GM12878 (cell line): ENCODE measurements at regions of chr6 and their contacts with region 1.

Region 1: GRCh38 chr6:105733565-105734162 is 330.8 kb upstream of the PREP start:
- DNase-seq: no peak
- ATAC-seq: peak; percentile 41; the same call in 1 of the 3 replicates
- H3K4me3 ChIP-seq: no peak overlapping the region
- H3K27ac ChIP-seq: no peak overlapping the region
- H3K4me1 ChIP-seq: no peaks in the 10 kb centered on the region
- H3K27me3 ChIP-seq: no peaks in the 10 kb centered on the region
- CTCF ChIP-seq: peak; percentile 48 to 52 (median 50); a peak in 5 of 6 replicates
- EP300 ChIP-seq: no peak
- POLR2A ChIP-seq: no peak
- RAD21 ChIP-seq: peak; percentile 56

Region 2: GRCh38 chr6:104784884-104785283 is 948.8 kb before region 1 on chr6:
- CTCF ChIA-PET with region 1: no interaction called
- POLR2A ChIA-PET with region 1: no interaction called
- RAD21 ChIA-PET with region 1: no interaction called
- SMC1A ChIA-PET with region 1: no interaction called
- in situ Hi-C with region 1: no loop called
- intact Hi-C with region 1: no loop called
- DNase-seq: no peak
- ATAC-seq: no peak
- H3K4me3 ChIP-seq: no peak overlapping the region
- H3K27ac ChIP-seq: no peak overlapping the region
- H3K4me1 ChIP-seq: peaks cover 3% of the 10 kb centered on the region; the same call in 1 of the 2 replicates
- H3K27me3 ChIP-seq: no peaks in the 10 kb centered on the region
- CTCF ChIP-seq: no peak
- EP300 ChIP-seq: no peak
- POLR2A ChIP-seq: no peak
- RAD21 ChIP-seq: no peak

Region 3: DNA sequence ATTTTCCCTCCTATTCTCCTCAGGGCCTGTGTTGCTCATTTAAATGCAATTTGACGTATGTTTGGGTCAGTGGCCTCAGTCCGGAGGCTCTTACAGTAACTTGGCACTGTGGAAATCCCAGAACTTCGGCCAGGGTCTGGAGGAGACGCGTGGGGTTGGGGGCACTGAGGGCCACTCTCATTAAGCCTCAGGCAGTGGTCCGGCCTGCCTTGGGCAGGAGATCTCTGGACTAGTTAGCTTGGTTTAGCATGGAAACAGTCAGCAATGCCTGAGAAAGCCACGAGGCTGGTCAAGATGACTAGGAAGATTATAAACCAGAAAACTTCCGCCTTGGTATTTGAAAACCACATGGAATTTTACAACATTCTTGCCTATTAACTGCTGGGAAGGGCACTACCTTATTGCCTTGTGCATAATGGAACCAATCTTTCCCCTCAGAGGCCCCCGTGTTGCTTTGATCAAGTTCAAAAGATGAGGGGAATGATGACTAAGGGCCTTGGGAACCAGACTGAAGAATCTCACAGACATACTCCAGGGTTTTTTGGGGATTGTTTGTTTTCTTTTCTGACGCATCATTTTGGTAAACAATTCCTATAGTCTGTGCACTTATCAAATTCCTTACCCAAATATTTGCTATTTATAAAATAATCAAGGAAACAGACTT is 124.8 kb before region 1 on chr6:
- CTCF ChIA-PET with region 1: no interaction called
- POLR2A ChIA-PET with region 1: interaction called, 10 read pairs
- RAD21 ChIA-PET with region 1: no interaction called
- SMC1A ChIA-PET with region 1: no interaction called
- in situ Hi-C with region 1: no loop called
- intact Hi-C with region 1: no loop called
- DNase-seq: no peak
- ATAC-seq: no peak
- H3K4me3 ChIP-seq: no peak overlapping the region
- H3K27ac ChIP-seq: no peak overlapping the region
- H3K4me1 ChIP-seq: no peaks in the 10 kb centered on the region; the same call in 1 of the 2 replicates
- H3K27me3 ChIP-seq: no peaks in the 10 kb centered on the region
- CTCF ChIP-seq: no peak
- EP300 ChIP-seq: no peak
- POLR2A ChIP-seq: no peak
- RAD21 ChIP-seq: no peak

Region 4: DNA sequence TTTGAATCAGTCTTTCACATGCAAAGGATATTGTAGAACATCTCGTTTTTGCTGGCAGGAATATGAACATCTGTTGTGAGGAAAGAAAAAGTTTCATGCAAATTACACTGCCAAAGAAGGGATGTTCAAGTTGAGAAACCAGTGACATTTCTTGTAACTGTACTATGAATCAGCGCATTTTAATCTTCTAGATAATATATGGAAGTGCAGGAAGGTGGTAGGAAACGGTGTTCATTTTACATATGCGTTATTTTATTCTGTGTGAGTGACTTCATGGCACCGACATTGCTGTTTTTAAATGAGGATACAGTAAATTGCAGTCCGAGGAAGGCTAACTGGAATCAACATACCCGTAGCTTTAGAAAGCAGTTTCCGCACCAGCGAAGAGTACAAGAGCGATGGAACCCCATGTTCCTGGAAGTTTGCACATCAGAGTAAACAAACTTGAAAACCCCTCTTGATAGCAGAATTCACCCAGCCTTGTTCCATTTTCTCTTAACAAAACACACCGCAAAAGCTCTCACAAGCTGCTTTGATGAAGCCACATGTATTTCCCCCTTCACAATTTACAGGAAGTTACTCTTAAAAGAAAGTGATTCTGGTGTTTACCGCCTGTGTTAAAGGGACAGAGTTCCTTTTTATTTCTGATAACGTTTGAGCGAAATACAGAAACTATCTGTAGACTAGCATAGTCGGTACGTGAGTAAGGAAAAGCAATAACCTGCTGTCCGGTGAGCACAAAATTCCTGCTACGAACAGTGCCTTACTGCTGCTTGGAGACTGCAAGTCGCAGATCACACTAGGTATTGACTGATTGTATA is 364.0 kb after region 1 on chr6:
- CTCF ChIA-PET with region 1: interaction called, 3 read pairs
- POLR2A ChIA-PET with region 1: no interaction called
- RAD21 ChIA-PET with region 1: interaction called, 4 read pairs
- SMC1A ChIA-PET with region 1: interaction called, 3 read pairs
- in situ Hi-C with region 1: loop called (anchors 10 kb)
- intact Hi-C with region 1: no loop called
- DNase-seq: peak; percentile 78
- ATAC-seq: peak; percentile 68
- H3K4me3 ChIP-seq: peak overlapping the region; percentile 72
- H3K27ac ChIP-seq: peak overlapping the region; percentile 80
- H3K4me1 ChIP-seq: peaks cover 34% of the 10 kb centered on the region
- H3K27me3 ChIP-seq: no peaks in the 10 kb centered on the region
- CTCF ChIP-seq: no peak
- EP300 ChIP-seq: peak; percentile 65 to 68
- POLR2A ChIP-seq: no peak
- RAD21 ChIP-seq: no peak